Activated naive CD4-positive, alpha-beta T cell treated with anti-CD3 and anti-CD28 coated beads for 36 hours (primary cell): ENCODE measurements at regions of chr1 and their contacts with region 1.

Region 1: DNA sequence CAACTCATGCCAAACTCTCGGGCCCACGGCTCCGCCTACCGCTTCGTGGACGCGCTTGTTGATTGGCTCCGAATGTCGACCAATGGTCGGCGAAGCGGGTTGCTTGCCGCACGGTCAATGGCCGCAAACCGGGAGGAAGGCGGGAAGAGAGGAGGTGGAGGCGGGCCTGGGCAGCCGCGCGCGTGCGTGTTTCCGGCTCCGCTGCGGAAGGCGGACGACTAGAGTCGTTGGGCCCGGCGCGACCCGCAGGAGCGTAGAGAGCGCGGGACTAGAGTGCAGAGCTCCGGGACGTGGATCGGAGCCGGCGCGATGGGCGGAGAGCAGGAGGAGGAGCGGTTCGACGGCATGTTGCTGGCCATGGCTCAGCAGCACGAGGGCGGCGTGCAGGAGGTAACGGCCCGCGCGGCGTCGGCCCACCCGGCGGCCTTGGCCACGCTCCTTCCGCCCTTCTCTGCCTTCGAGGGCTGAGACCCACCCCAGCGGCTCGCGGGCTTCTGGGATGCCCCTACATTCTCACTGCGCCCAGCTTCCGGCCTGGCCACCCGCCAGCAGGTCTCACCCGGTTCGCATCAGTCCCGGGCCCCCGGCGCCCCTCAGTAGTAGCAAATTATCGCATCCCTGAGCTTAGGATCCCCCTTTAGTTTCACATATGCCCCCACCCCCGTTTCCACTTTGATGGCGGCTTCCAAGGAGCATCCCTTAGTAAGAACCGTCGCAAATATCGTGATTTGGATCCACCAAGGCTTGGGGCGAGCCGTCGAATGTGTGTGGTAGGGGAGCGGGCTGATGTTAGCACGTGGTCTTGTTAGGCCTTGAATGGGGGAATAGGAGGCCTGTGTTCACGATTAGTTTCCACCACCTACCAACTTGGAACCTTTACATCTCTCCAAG is at the start of gene NUDC:
- DNase-seq: peak; percentile 98
- H3K4me3 Mint-ChIP-seq: peak within 1 kb of the TSS; percentile 99
- H3K27ac Mint-ChIP-seq: peak within 1 kb of the TSS; percentile 93
- H3K4me1 Mint-ChIP-seq: peaks cover 37% of the 10 kb centered on the region
- H3K27me3 Mint-ChIP-seq: no peaks in the 10 kb centered on the region
- total RNA-seq, gene NUDC: 75.3 to 78.1 TPM

Region 2: DNA sequence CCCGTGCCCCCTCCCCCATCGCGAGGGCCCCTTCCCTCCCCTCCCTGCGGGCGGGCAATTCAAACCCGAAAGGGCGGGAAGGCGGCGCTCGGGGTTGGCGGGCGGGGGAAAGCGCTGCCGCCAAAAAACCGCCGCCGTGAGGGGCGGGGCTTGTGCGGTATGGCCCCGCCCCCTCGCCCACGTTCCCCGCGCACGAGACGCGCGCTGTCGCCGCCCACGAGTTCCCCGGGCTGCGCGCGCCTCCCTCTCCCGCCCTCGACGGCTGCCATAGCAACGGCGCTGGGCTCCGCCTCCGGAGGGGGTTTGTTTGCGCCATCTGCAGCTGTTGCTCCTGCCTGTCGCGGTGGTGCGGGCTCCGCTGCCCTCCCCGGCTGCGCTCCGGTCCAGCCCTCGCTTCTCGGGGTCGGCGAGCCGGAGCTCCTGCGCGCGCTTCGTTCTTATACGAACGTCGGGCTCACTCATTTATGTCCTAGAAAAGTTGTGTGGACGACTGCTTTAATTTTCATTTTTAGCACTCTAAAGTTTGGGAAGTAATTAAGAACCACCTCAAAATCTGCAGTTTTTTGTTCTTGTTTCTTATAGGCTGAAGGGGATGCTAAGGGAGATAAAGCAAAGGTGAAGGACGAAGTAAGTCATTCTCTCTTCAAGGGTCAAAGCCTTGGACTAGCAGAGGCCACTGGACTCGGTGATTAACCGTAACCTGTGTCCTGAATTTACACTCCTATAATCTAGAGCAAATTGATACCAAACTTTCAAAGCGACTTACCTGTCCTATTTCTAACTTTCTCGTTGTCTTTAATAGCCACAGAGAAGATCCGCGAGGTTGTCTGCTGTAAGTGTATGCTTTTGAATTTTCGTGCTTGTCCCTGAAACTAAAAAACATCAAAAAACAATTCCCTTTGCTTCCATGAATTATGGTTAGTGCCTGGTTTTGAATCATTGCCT is 448.6 kb before region 1 on chr1:
- CTCF ChIA-PET with region 1: no interaction called
- intact Hi-C with region 1: loop called (anchors 1 kb)
- DNase-seq: peak; percentile 96
- H3K4me3 Mint-ChIP-seq: peak overlapping the region; percentile 87
- H3K27ac Mint-ChIP-seq: peak overlapping the region; percentile 71
- H3K4me1 Mint-ChIP-seq: peaks cover 49% of the 10 kb centered on the region
- H3K27me3 Mint-ChIP-seq: no peaks in the 10 kb centered on the region

Region 3: DNA sequence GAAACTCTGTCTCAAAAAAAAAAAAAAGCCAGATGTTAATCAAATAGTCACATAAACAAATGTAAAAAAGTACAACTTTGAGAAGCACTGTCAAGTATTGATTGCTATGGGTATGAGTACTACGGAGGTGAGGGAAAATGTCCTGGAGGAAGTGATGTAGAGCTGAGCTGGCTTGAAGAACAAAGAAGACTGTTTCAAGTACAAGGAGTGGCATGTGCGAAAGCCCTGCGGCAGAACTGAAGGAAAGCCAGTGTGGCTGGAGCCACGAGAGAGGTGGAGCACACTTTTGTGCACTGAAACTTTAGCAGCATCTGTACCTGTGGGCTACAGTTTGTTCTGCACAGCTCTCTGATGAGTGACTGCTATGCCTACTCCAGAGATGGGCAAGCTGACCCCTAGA is 397.6 kb before region 1 on chr1:
- CTCF ChIA-PET with region 1: no interaction called
- intact Hi-C with region 1: no loop called
- DNase-seq: no peak
- H3K4me3 Mint-ChIP-seq: no peak overlapping the region
- H3K27ac Mint-ChIP-seq: no peak overlapping the region
- H3K4me1 Mint-ChIP-seq: peaks cover 2% of the 10 kb centered on the region
- H3K27me3 Mint-ChIP-seq: peaks cover 3% of the 10 kb centered on the region

Region 4: GRCh38 chr1:26787706-26788514 is 133.9 kb before region 1 on chr1 and contains the start of gene PIGV:
- CTCF ChIA-PET with region 1: no interaction called
- intact Hi-C with region 1: no loop called
- DNase-seq: peak; percentile 87
- H3K4me3 Mint-ChIP-seq: peak within 1 kb of the TSS; percentile 83
- H3K27ac Mint-ChIP-seq: peak within 1 kb of the TSS; percentile 97
- H3K4me1 Mint-ChIP-seq: peaks cover 58% of the 10 kb centered on the region
- H3K27me3 Mint-ChIP-seq: no peaks in the 10 kb centered on the region
- total RNA-seq, gene PIGV: 10.6 to 11.2 TPM

Region 5: GRCh38 chr1:26900001-26900814 is 21.6 kb before region 1 on chr1 and contains the start of gene GPATCH3:
- CTCF ChIA-PET with region 1: interaction called, 6 read pairs
- intact Hi-C with region 1: loop called (anchors 1 kb)
- DNase-seq: peak; percentile 95
- H3K4me3 Mint-ChIP-seq: peak within 1 kb of the TSS; percentile 97
- H3K27ac Mint-ChIP-seq: peak within 1 kb of the TSS; percentile 97
- H3K4me1 Mint-ChIP-seq: peaks cover 20% of the 10 kb centered on the region
- H3K27me3 Mint-ChIP-seq: no peaks in the 10 kb centered on the region
- total RNA-seq, gene GPATCH3: 7.9 to 8.5 TPM

Region 6: DNA sequence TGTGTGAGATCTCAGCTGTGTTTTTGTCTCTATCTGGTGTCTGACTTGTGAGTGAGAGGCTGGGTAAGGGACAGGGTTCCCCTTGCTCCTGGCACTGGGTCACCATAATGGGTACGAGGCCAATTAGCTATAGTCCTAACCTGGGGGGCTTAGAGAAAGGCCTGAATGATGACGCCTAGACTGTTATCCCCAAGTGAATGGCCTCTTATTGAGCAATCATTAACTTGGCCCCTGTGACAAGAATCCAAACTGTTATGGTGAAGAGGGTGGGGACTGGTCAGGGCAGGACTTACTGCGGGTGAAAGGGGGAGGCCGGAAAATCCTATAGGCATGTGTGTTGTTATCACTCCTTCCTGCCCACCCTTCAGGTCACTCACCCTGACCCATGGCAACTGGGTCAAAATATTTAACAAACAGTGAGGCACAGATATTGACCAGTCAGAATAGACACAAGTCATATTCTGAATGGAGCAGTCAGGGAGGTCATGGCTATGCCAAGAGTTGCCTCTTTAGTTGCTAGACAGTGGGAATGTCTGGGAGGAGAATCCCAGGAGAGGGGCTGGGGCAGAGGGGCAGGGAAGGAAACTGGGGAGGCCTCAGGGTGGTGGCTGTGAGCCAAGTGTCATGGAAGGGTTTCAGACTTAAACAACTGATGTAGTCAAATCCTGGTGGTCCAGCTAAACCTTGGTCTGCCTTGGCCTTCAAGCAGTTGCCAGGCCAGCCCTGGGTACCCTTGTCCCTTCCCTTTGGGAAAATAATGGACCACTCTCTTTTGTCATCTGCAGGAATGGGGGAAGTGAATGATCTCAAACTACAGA is 11.2 kb before region 1 on chr1:
- CTCF ChIA-PET with region 1: no interaction called
- intact Hi-C with region 1: no loop called
- DNase-seq: no peak
- H3K4me3 Mint-ChIP-seq: no peak overlapping the region
- H3K27ac Mint-ChIP-seq: no peak overlapping the region
- H3K4me1 Mint-ChIP-seq: no peaks in the 10 kb centered on the region
- H3K27me3 Mint-ChIP-seq: no peaks in the 10 kb centered on the region